Activated CD4-positive, alpha-beta T cell treated with anti-CD3 and anti-CD28 coated beads, Interleukin-2, amount 10 ng/mL, durations not matched to agents 7 days and 5 days (primary cell): ENCODE measurements at regions of chr18 and their contacts with region 1.

Region 1: GRCh38 chr18:42100911-42101310 is 145.9 kb downstream of the PIK3C3 start:
- DNase-seq: no peak
- H3K4me3 Mint-ChIP-seq: no peak overlapping the region
- H3K27ac Mint-ChIP-seq: no peak overlapping the region
- H3K4me1 Mint-ChIP-seq: peaks cover 4% of the 10 kb centered on the region
- H3K27me3 Mint-ChIP-seq: no peaks in the 10 kb centered on the region

Region 2: DNA sequence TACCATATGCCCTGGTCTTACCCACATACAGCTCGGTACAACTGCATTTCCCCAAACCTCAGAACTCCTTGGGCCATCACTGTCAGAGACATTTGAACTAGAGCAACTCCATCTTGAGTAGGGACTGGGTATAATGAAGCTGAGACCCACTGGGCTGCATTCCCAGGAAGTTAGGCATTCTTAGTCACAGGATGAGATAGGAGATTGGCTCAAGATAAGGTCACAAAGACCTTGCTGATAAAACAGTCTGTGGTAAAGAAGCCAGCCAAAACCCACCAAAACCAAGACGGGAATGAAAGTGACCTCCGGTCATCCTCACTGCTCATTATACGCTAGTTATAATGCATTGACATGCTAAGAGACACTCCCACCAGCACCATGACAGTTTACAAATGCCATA is 14.6 kb before region 1 on chr18:
- CTCF ChIA-PET with region 1: no interaction called
- POLR2A ChIA-PET with region 1: no interaction called
- DNase-seq: no peak
- H3K4me3 Mint-ChIP-seq: no peak overlapping the region
- H3K27ac Mint-ChIP-seq: no peak overlapping the region
- H3K4me1 Mint-ChIP-seq: peaks cover 14% of the 10 kb centered on the region
- H3K27me3 Mint-ChIP-seq: no peaks in the 10 kb centered on the region

Region 3: DNA sequence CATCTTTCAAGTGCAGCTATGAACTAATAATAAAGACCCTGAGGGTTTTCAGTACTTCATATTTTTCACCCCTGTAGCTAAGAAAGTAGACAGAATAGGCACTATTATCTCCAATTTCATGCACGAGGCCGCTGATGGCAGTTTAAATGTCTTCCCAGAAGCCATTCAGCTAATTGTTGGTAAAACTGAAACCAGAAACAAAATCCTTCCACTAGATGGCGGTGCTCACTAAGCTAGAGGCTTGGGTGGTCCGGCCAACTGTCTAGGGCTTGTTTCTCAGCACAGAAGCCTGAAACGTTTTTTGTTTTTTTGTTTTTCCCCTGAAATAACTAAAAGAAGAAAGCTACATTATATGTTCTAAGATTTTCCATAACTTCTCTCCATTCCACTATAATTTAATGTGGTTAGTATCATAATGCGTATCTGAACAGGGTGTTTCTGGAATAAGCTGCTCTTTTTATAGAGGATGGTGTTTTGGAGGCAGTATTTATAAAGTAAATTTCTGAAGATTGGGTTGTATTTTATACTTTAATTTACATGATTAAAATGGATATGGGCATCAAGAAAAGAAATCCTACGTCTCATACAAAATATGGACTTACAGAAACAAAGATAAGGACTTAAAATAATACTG is 13.5 kb after region 1 on chr18:
- CTCF ChIA-PET with region 1: interaction called, 13 read pairs
- POLR2A ChIA-PET with region 1: no interaction called
- DNase-seq: peak; percentile 68
- H3K4me3 Mint-ChIP-seq: no peak overlapping the region
- H3K27ac Mint-ChIP-seq: peak overlapping the region; percentile 20
- H3K4me1 Mint-ChIP-seq: peaks cover 16% of the 10 kb centered on the region
- H3K27me3 Mint-ChIP-seq: peaks cover 10% of the 10 kb centered on the region

Region 4: DNA sequence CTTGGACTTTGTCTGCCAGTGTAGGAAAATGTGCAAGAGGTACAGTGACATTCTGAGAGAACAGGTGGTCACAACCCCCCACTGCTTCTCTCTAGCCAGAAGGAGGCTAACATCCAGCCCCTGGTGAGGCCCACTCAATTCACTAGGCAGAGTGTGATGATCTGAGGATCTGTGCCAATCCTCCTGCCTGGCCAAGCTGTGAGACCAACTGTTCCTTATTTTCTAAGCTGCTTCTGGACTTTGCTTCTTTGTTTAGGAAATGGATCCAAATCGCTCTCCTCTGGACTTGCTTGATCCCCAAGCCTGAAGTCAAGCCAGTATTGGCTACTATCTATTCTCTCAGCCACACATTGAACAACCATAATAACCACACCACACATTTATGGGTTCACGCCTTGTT is 57.0 kb after region 1 on chr18:
- CTCF ChIA-PET with region 1: no interaction called
- POLR2A ChIA-PET with region 1: no interaction called
- DNase-seq: no peak
- H3K4me3 Mint-ChIP-seq: no peak overlapping the region
- H3K27ac Mint-ChIP-seq: no peak overlapping the region
- H3K4me1 Mint-ChIP-seq: no peaks in the 10 kb centered on the region
- H3K27me3 Mint-ChIP-seq: no peaks in the 10 kb centered on the region

Region 5: DNA sequence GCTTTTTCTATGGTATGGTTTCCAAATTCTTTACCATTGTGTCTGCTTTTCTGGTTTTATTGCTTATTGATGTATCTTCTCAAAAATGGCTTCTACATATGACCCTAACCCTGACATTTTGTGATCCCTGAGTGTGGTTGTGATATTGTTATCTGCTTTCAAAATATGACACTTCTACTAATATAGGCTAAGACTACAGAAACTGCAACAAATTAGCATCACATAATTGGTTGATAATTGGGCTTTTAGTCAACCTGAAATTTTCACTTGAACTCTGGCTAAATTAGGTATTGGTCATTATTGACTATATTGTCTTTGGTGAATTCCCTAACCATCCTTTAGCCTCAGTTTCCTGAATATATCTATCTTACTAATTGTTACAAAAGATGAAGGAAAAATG is 100.2 kb after region 1 on chr18:
- CTCF ChIA-PET with region 1: no interaction called
- POLR2A ChIA-PET with region 1: no interaction called
- DNase-seq: no peak
- H3K4me3 Mint-ChIP-seq: no peak overlapping the region
- H3K27ac Mint-ChIP-seq: no peak overlapping the region
- H3K4me1 Mint-ChIP-seq: no peaks in the 10 kb centered on the region
- H3K27me3 Mint-ChIP-seq: no peaks in the 10 kb centered on the region